ENCODE measurements at regions of chr11 and their contacts with region 1.

Region 1: DNA sequence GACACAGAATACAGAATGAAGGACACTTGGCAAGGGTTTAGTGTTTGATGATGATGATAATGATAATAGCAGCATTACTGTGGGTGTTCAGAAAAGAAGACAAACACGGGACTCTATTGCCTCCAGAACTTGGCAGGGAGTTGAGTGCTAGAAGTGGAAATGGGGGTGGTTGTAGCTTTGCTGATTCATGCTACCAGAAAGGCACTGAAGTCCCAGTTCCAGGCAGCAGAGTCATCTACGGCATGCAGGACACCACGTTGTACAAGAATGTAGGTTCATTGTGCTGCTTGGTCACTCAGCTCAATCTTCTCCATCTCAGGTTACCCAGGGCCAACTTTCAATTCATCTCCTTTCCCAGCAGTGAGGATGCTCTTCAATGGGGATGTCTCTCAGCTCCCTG is 115.7 kb downstream of the NTM start:
- DNase-seq: peak; percentile 49 to 71
- H3K4me3 ChIP-seq: no peak overlapping the region
- H3K27ac ChIP-seq: no peak overlapping the region
- H3K4me1 ChIP-seq: no peaks in the 10 kb centered on the region
- H3K27me3 ChIP-seq: no peaks in the 10 kb centered on the region
- CTCF ChIP-seq: no peak

Region 2: DNA sequence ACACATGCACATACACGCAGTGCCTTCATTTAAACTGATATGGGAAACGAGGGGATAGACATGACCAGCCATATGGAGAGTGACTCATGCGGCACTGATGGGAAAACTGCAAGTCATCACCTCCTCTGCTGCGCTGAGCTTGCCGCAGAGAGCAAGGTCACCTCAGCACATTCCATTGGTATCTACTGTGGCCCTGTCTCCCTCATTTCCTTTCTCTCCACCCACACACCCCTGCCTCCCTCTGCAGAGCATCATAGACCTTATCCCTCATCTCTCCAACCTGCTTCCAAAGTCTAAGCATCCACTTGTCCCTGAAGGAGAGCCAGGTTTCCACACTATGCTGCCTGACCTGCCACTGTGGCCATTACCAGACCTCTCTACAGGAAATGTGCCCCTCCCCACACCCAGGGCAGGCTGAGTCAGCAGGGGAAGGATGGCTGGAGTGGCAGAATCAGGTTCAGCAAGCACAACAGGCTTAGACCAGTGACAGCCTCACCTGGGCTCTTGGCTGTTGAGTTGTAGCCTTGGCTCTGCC is 452.9 kb before region 1 on chr11:
- CTCF ChIA-PET with region 1: no interaction called
- POLR2A ChIA-PET with region 1: no interaction called
- intact Hi-C with region 1: loop called (anchors 1 kb)
- DNase-seq: peak; percentile 89 to 92
- H3K4me3 ChIP-seq: no peak overlapping the region; the same call in 1 of the 2 replicates
- H3K27ac ChIP-seq: peak overlapping the region; percentile 90
- H3K4me1 ChIP-seq: peaks cover 25% of the 10 kb centered on the region
- H3K27me3 ChIP-seq: no peaks in the 10 kb centered on the region
- CTCF ChIP-seq: no peak

Region 3: GRCh38 chr11:131423715-131424114 is 62.4 kb before region 1 on chr11:
- CTCF ChIA-PET with region 1: interaction called, 4 read pairs
- POLR2A ChIA-PET with region 1: interaction called, 5 read pairs
- intact Hi-C with region 1: loop called (anchors 1 kb)
- DNase-seq: peak; percentile 65 to 77
- H3K4me3 ChIP-seq: no peak overlapping the region
- H3K27ac ChIP-seq: no peak overlapping the region
- H3K4me1 ChIP-seq: no peaks in the 10 kb centered on the region
- H3K27me3 ChIP-seq: no peaks in the 10 kb centered on the region
- CTCF ChIP-seq: no peak

Region 4: DNA sequence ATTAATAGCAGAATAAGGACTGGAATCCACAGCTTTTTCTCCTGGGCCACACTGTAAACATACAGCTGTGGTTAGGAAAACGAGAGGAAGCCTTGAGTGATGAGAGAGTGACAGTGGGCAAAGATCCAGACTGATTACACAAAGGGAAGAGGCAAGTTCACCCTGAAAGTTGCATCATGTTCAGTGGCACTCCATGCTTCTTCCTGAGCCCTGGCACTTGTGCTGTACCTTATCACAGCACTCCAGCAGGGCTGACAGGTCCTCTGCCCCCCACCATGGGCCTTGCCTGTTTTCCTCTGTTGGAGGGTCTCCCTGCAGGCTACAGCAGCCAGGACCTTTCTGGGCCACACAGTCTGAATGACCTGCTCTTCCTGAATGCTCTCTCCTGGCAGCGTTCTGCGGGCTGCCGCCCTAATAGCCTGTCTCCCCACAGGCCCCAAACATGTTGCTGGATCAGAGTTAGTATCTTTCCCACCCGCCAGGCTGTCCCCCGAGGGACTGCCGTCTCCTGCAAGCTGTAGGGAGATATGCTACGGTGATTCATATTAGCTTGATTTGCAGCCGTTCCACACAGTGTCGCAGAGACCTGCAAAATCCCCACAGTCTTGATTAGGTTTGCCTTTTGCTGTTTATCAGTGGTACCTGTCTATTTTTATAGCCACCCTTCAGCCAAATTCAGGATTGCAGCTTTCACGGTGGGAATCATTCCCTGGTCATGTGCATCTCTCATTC is 55.5 kb before region 1 on chr11:
- CTCF ChIA-PET with region 1: no interaction called
- POLR2A ChIA-PET with region 1: no interaction called
- intact Hi-C with region 1: loop called (anchors 2 kb)
- DNase-seq: no peak
- H3K4me3 ChIP-seq: no peak overlapping the region
- H3K27ac ChIP-seq: no peak overlapping the region
- H3K4me1 ChIP-seq: no peaks in the 10 kb centered on the region
- H3K27me3 ChIP-seq: no peaks in the 10 kb centered on the region
- CTCF ChIP-seq: no peak

Region 5: GRCh38 chr11:131455843-131456704 is 30.0 kb before region 1 on chr11:
- CTCF ChIA-PET with region 1: no interaction called
- POLR2A ChIA-PET with region 1: no interaction called
- intact Hi-C with region 1: no loop called
- DNase-seq: no peak
- H3K4me3 ChIP-seq: no peak overlapping the region
- H3K27ac ChIP-seq: no peak overlapping the region
- H3K4me1 ChIP-seq: no peaks in the 10 kb centered on the region
- H3K27me3 ChIP-seq: 0 out of 2 replicates have a peak, but pooled peaks cover 6% of the 10 kb centered on the region
- CTCF ChIP-seq: no peak

Region 6: DNA sequence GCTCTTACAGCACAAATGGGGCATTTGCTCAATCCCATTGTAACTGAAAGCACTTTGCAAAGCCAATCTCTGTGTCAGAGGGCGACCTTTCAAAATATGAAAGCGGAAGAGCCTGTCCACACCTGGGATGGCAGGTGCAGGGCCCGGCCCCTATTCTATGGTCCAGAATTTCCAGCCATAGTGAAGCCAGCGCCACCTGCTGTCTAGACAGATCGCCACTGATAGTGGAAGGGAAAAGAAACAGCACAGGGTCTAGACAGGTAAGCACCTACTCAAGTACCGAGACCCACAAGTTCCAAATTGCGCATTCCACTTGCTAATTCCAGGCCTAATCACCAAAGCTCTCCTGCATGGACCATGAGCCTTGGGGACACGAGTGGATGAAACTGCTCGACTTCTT is 25.7 kb after region 1 on chr11:
- CTCF ChIA-PET with region 1: no interaction called
- POLR2A ChIA-PET with region 1: no interaction called
- intact Hi-C with region 1: loop called (anchors 1 kb)
- DNase-seq: peak; percentile 42 to 59
- H3K4me3 ChIP-seq: no peak overlapping the region
- H3K27ac ChIP-seq: no peak overlapping the region
- H3K4me1 ChIP-seq: no peaks in the 10 kb centered on the region
- H3K27me3 ChIP-seq: peaks cover 17% of the 10 kb centered on the region
- CTCF ChIP-seq: peak; percentile 60

Region 7: GRCh38 chr11:131522851-131523250 is 36.8 kb after region 1 on chr11:
- CTCF ChIA-PET with region 1: no interaction called
- POLR2A ChIA-PET with region 1: no interaction called
- intact Hi-C with region 1: no loop called
- DNase-seq: no peak
- H3K4me3 ChIP-seq: no peak overlapping the region
- H3K27ac ChIP-seq: no peak overlapping the region
- H3K4me1 ChIP-seq: no peaks in the 10 kb centered on the region
- H3K27me3 ChIP-seq: peaks cover 28% of the 10 kb centered on the region
- CTCF ChIP-seq: no peak

Measured in PC-9 (cell line).